ENCODE measurements at regions of chr1 and their contacts with region 1.

Region 1: DNA sequence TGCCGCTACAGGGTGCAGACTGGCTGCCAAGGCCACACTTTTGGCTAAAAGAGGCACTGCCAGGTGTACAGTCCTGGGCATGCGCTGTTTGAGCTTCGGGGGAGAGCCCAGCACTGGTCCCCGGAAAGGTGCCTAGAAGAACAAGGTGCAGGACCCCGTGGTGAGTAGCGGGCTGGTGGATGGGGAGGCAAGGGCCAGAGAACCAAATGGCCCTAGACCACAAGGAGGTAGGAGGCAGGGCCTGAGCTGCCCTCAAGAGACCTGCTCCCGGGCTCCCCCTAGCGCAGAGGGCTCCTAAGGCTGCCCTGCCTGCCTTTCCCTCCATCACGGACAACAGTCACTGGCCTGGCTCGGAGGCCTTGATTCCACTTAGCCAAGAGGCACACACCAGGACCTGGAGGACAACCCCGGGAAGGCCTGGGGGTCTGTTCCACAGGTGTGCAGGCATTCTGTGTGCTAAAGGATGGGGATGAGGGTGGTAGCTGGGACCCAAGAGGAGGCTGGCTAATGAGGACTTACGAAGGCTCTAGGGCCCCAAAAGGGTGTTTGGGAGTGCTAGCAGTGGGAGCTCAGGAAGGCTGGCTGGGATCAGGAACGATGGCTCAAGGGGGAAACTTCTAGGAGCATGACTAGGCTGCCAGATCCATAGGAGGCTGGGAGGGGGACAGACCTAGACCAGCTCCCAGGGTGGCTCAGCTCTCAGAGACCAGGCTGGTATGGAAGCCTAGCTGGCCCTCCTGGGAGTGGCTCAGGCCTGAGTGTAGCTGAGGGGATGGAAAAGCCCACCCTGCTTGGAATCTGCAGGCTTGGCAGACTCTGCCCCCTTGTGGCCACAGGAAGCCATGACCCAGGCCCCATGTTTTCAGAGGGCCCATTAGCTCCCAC is 742 bp downstream of the ARTN start:
- DNase-seq: peak; percentile 47 to 70
- ATAC-seq: peak; percentile 63 to 74 (median 72)
- H3K4me3 ChIP-seq: no peak overlapping the region
- H3K4me3 Mint-ChIP-seq: no peak overlapping the region
- H3K27ac ChIP-seq: no peak overlapping the region
- H3K27ac Mint-ChIP-seq: no peak overlapping the region
- H3K4me1 ChIP-seq: peaks cover 30% of the 10 kb centered on the region
- H3K4me1 Mint-ChIP-seq: peaks cover 0 to 19% of the 10 kb centered on the region in 2 donors
- H3K27me3 ChIP-seq: peaks cover 31% of the 10 kb centered on the region
- H3K27me3 Mint-ChIP-seq: peaks cover 19 to 28% of the 10 kb centered on the region in 2 donors
- CTCF ChIP-seq: peak; percentile 79

Region 2: GRCh38 chr1:43529206-43529731 is 405.1 kb before region 1 on chr1:
- intact Hi-C with region 1: loop called (anchors 1 kb)
- DNase-seq: peak; percentile 75 to 89
- ATAC-seq: peak; percentile 66 to 73 (median 67)
- H3K4me3 ChIP-seq: no peak overlapping the region
- H3K4me3 Mint-ChIP-seq: peak overlapping the region; percentile 22
- H3K27ac ChIP-seq: no peak overlapping the region
- H3K27ac Mint-ChIP-seq: no peak overlapping the region
- H3K4me1 ChIP-seq: peaks cover 13% of the 10 kb centered on the region
- H3K4me1 Mint-ChIP-seq: peaks cover 15 to 32% of the 10 kb centered on the region in 2 donors
- H3K27me3 ChIP-seq: peaks cover 20% of the 10 kb centered on the region
- H3K27me3 Mint-ChIP-seq: peaks cover 47 to 57% of the 10 kb centered on the region in 2 donors
- CTCF ChIP-seq: peak; percentile 96

Region 3: GRCh38 chr1:43763497-43763973 is 170.8 kb before region 1 on chr1:
- intact Hi-C with region 1: loop called (anchors 1 kb)
- DNase-seq: peak in 1 of 2 donors; percentile 73
- ATAC-seq: peak; percentile 73 to 84 (median 77)
- H3K4me3 ChIP-seq: no peak overlapping the region
- H3K4me3 Mint-ChIP-seq: no peak overlapping the region
- H3K27ac ChIP-seq: no peak overlapping the region
- H3K27ac Mint-ChIP-seq: no peak overlapping the region
- H3K4me1 ChIP-seq: no peaks in the 10 kb centered on the region
- H3K4me1 Mint-ChIP-seq: peaks cover 5 to 6% of the 10 kb centered on the region in 2 donors
- H3K27me3 ChIP-seq: no peaks in the 10 kb centered on the region
- H3K27me3 Mint-ChIP-seq: no peaks in the 10 kb centered on the region
- CTCF ChIP-seq: peak; percentile 62

Region 4: GRCh38 chr1:43946236-43947060 is 12.1 kb after region 1 on chr1 and contains the start of gene IPO13:
- intact Hi-C with region 1: no loop called
- DNase-seq: peak; percentile 95 to 97
- ATAC-seq: peak; percentile 94 to 99 (median 96)
- H3K4me3 ChIP-seq: peak within 1 kb of the TSS; percentile 54
- H3K4me3 Mint-ChIP-seq: peak within 1 kb of the TSS; percentile 91
- H3K27ac ChIP-seq: peak within 1 kb of the TSS; percentile 95
- H3K27ac Mint-ChIP-seq: peak within 1 kb of the TSS; percentile 88 to 98
- H3K4me1 ChIP-seq: peaks cover 33% of the 10 kb centered on the region
- H3K4me1 Mint-ChIP-seq: peaks cover 35 to 64% of the 10 kb centered on the region in 2 donors
- H3K27me3 ChIP-seq: no peaks in the 10 kb centered on the region
- H3K27me3 Mint-ChIP-seq: no peaks in the 10 kb centered on the region
- CTCF ChIP-seq: peak; percentile 57
- total RNA-seq, gene IPO13: 18.1 to 22.7 (median 18.4) TPM

Measured in natural killer cell (primary cell).